ENCODE measurements at regions of chr1 and their contacts with region 1.

Region 1: DNA sequence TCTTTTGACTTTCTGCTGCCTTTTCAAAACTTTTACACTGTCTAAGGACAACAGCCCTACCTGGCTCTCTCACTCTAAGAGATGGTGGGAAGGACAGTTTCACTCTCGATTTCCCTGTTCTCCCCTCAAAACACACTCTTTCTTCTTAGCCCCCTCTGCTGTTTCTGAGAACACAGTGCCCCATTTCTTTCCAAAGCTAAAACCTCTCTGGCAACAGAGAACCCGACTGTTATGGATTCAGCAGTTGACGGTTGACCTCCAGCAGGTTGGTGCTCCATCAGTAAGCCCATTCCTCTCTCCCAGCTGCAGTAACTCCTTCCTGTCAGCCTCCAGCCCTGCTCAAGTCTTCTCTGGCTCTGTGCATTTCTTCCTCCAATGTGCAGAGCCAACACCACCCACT is 88.2 kb upstream of the ABCD3 start:
- DNase-seq: no peak
- ATAC-seq: peak; percentile 46
- H3K4me3 ChIP-seq: no peak overlapping the region
- H3K27ac ChIP-seq: no peak overlapping the region
- H3K4me1 ChIP-seq: peaks cover 3 to 5% of the 10 kb centered on the region in 2 donors
- H3K27me3 ChIP-seq: no peaks in the 10 kb centered on the region

Region 2: GRCh38 chr1:94237291-94238226 is 92.4 kb before region 1 on chr1 and contains the start of gene ARHGAP29:
- intact Hi-C with region 1: loop called (anchors 1 to 5 kb)
- DNase-seq: peak; percentile 86 to 94
- ATAC-seq: peak; percentile 95
- H3K4me3 ChIP-seq: peak within 1 kb of the TSS; percentile 45 to 60
- H3K27ac ChIP-seq: peak within 1 kb of the TSS in 1 of 2 donors; percentile 73
- H3K4me1 ChIP-seq: peaks cover 0 to 3% of the 10 kb centered on the region in 2 donors
- H3K27me3 ChIP-seq: peaks cover 0 to 2% of the 10 kb centered on the region in 2 donors
- total RNA-seq, gene ARHGAP29: 40.1 to 65.4 TPM

Measured in aorta (tissue), 5 donors.